AG04450 (cell line): ENCODE measurements at regions of chr18 and their contacts with region 1.

Region 1: GRCh38 chr18:48445540-48445939 is 36.4 kb upstream of the ZBTB7C start:
- DNase-seq: peak; percentile 50
- H3K4me3 ChIP-seq: no peak overlapping the region
- H3K27ac ChIP-seq: no peak overlapping the region
- H3K27me3 ChIP-seq: peaks cover 66% of the 10 kb centered on the region
- CTCF ChIP-seq: peak; percentile 97

Region 2: GRCh38 chr18:48007955-48008701 is 437.4 kb before region 1 on chr18:
- CTCF ChIA-PET with region 1: interaction called, 10 read pairs
- POLR2A ChIA-PET with region 1: no interaction called
- DNase-seq: no peak
- H3K4me3 ChIP-seq: peak overlapping the region; percentile 60
- H3K27ac ChIP-seq: no peak overlapping the region
- H3K27me3 ChIP-seq: peaks cover 20% of the 10 kb centered on the region
- CTCF ChIP-seq: peak; percentile 23

Region 3: GRCh38 chr18:48030616-48031480 is 414.7 kb before region 1 on chr18:
- CTCF ChIA-PET with region 1: interaction called, 15 read pairs
- POLR2A ChIA-PET with region 1: no interaction called
- DNase-seq: no peak
- H3K4me3 ChIP-seq: no peak overlapping the region
- H3K27ac ChIP-seq: no peak overlapping the region
- H3K27me3 ChIP-seq: peaks cover 8% of the 10 kb centered on the region
- CTCF ChIP-seq: peak; percentile 69

Region 4: GRCh38 chr18:48230467-48231113 is 214.9 kb before region 1 on chr18:
- CTCF ChIA-PET with region 1: interaction called, 23 read pairs
- POLR2A ChIA-PET with region 1: no interaction called
- DNase-seq: peak; percentile 3
- H3K4me3 ChIP-seq: no peak overlapping the region
- H3K27ac ChIP-seq: no peak overlapping the region
- H3K27me3 ChIP-seq: peaks cover 2% of the 10 kb centered on the region
- CTCF ChIP-seq: peak; percentile 52

Region 5: GRCh38 chr18:48428475-48429177 is 16.9 kb before region 1 on chr18:
- CTCF ChIA-PET with region 1: interaction called, 10 read pairs
- POLR2A ChIA-PET with region 1: no interaction called
- DNase-seq: no peak
- H3K4me3 ChIP-seq: no peak overlapping the region
- H3K27ac ChIP-seq: no peak overlapping the region
- H3K27me3 ChIP-seq: peaks cover 32% of the 10 kb centered on the region
- CTCF ChIP-seq: no peak

Region 6: GRCh38 chr18:48455555-48456478 is 10.3 kb after region 1 on chr18:
- CTCF ChIA-PET with region 1: interaction called, 77 read pairs
- POLR2A ChIA-PET with region 1: no interaction called
- DNase-seq: peak; percentile 50
- H3K4me3 ChIP-seq: no peak overlapping the region
- H3K27ac ChIP-seq: no peak overlapping the region
- H3K27me3 ChIP-seq: peaks cover 52% of the 10 kb centered on the region
- CTCF ChIP-seq: no peak

Region 7: DNA sequence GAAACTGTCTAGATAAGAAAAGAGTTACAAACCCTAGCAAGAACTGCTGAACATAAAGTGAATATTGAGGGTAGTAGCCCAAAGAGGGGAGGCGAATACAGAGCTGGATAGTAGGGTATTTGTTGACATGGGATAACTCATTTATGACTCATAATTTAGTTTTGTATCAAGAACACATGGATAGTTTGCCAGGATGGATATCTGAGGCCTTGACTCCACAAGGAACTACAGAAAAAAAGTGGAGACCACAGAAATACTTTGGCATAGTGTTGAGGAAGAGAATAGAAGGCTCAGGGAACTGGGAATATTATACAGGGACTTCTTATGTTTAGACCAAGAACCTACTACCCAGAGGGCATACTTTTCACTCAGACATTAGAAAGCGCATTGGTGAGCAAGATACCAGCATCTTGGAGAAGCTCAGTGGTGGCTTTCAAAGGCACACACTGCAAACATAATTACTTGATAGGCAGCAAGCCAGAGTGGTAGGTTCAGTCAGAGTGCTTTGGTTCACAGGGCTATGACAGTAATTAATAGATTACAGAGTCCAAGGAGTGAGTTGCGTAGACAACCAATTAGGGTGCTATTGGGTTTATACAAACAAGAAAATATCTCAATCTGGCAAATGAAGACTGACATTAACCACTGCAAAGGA is 15.5 kb after region 1 on chr18:
- CTCF ChIA-PET with region 1: interaction called, 77 read pairs
- POLR2A ChIA-PET with region 1: no interaction called
- DNase-seq: no peak
- H3K4me3 ChIP-seq: no peak overlapping the region
- H3K27ac ChIP-seq: no peak overlapping the region
- H3K27me3 ChIP-seq: peaks cover 14% of the 10 kb centered on the region
- CTCF ChIP-seq: no peak